Endothelial cell of umbilical vein (primary cell): ENCODE measurements at regions of chr3 and their contacts with region 1.

Region 1: GRCh38 chr3:52259035-52259434 is 13.5 kb downstream of the PPM1M start:
- DNase-seq: peak; percentile 73
- H3K4me3 ChIP-seq: no peak overlapping the region
- H3K27ac ChIP-seq: peak overlapping the region; percentile 54
- H3K4me1 ChIP-seq: peaks cover 15% of the 10 kb centered on the region
- H3K27me3 ChIP-seq: no peaks in the 10 kb centered on the region
- CTCF ChIP-seq: no peak
- POLR2A ChIP-seq: no peak

Region 2: DNA sequence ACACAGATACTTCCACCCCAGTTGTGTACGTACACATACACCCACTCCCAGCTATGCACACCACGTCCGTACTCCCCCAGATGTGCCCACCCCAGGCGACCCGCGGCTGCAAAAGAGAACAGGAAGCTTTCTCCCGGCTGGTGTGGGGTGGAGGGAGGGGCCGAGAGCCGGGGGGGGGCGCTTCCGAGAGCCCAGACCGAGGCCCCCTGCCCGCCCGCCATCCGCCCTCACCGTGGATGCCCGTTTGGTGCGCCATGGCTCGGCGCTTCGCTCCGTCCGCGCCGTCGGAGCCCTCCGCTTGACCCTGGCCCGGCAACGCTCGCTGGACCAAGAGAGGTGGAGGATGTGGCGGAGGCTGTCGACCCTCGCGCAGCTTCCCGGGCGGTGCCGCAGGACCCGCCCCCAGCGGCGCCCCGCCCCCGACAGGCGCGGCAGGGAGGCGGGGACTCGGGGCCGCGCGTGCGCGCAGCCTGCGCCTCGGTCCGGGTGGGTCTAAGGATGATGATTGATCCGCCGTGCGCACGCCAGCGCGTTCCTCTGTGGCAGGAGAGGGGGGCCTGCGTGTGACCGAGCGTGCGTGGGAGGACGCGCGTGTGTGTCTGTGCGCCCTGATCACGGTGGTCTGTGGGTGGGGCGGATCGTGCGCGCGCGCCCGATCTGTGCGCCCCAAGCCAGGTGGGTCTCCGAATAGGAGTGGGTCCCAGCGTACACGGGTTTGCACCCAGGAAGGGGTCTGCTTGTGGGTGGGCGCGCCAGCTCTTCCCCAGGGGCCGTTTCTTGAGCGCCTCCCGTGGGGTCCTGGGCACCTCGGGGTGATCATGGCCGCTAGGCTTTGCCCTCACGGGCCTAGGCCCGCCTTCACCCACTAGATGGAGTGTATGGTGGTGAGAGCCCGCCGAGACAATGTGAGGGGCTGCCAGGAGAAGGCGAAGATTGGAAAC is 20.0 kb before region 1 on chr3 and contains the start of gene TWF2:
- CTCF ChIA-PET with region 1: interaction called, 14 read pairs
- POLR2A ChIA-PET with region 1: no interaction called
- dilution Hi-C with region 1: no loop called
- intact Hi-C with region 1: no loop called
- DNase-seq: peak; percentile 82
- H3K4me3 ChIP-seq: peak within 1 kb of the TSS; percentile 20 to 98 (median 66)
- H3K27ac ChIP-seq: peak within 1 kb of the TSS; percentile 80
- H3K4me1 ChIP-seq: peaks cover 23% of the 10 kb centered on the region
- H3K27me3 ChIP-seq: no peaks in the 10 kb centered on the region
- CTCF ChIP-seq: peak; percentile 36 to 62
- POLR2A ChIP-seq: peak; percentile 87
- total RNA-seq, gene TWF2: 82.6 and 82.9 TPM in 2 replicates

Region 3: GRCh38 chr3:52270252-52270754 is 11.3 kb after region 1 on chr3:
- CTCF ChIA-PET with region 1: interaction called, 6 read pairs
- POLR2A ChIA-PET with region 1: no interaction called
- dilution Hi-C with region 1: no loop called
- intact Hi-C with region 1: loop called (anchors 1 kb)
- DNase-seq: peak; percentile 93
- H3K4me3 ChIP-seq: no peak overlapping the region
- H3K27ac ChIP-seq: peak overlapping the region; percentile 66
- H3K4me1 ChIP-seq: peaks cover 38% of the 10 kb centered on the region
- H3K27me3 ChIP-seq: no peaks in the 10 kb centered on the region
- CTCF ChIP-seq: no peak
- POLR2A ChIP-seq: no peak

Region 4: DNA sequence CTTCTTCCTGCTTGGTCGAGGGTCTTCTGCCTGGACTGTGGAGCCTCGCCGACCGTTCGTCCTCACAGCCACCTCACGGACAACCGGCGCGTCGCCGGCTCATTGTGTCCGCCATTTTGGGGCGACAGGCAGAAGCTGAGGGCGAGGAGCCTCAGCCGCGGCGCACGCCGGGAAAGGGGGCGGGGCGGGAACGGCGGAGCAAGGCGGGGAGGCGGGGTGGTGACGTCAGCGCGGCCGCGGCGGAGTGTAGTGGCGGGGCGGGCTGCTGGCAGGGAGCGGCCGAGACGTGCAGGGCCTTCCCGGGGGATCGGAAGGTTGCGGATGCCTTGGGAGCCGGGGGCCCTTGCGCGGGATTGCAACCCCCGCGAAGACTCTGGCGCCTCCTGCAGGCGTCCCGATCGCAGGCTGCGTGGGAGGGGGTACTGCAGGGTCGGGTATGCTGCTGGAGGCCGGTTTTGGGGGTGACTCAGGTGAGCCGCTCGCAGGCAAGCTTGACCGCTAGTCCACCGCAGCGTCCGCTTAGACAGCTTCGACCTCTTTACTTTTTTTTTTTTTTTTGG is 19.6 kb after region 1 on chr3 and contains the start of gene WDR82:
- CTCF ChIA-PET with region 1: interaction called, 25 read pairs
- POLR2A ChIA-PET with region 1: interaction called, 5 read pairs
- dilution Hi-C with region 1: no loop called
- intact Hi-C with region 1: no loop called
- DNase-seq: peak; percentile 94
- H3K4me3 ChIP-seq: peak within 1 kb of the TSS; percentile 53 to 96 (median 87)
- H3K27ac ChIP-seq: peak within 1 kb of the TSS; percentile 62
- H3K4me1 ChIP-seq: peaks cover 34% of the 10 kb centered on the region
- H3K27me3 ChIP-seq: no peaks in the 10 kb centered on the region
- CTCF ChIP-seq: peak; percentile 35 to 57
- POLR2A ChIP-seq: peak; percentile 95
- total RNA-seq, gene WDR82: 71.3 and 71.8 TPM in 2 replicates